ENCODE measurements at regions of chr11 and their contacts with region 1.

Region 1: GRCh38 chr11:16820324-16821092 is 82.1 kb downstream of the C11orf58 start:
- DNase-seq: peak; percentile 37
- ATAC-seq: peak; percentile 95
- H3K4me3 ChIP-seq: no peak overlapping the region
- H3K27ac ChIP-seq: no peak overlapping the region
- H3K4me1 ChIP-seq: peaks cover 4 to 9% of the 10 kb centered on the region in 2 experiments; a peak in 3 of 4 replicates
- H3K27me3 ChIP-seq: no peaks in the 10 kb centered on the region
- CTCF ChIP-seq: peak; percentile 80 to 95 (median 91)
- POLR2A ChIP-seq: no peak
- RAD21 ChIP-seq: peak; percentile 88

Region 2: GRCh38 chr11:16809886-16810668 is 10.4 kb before region 1 on chr11:
- CTCF ChIA-PET with region 1: interaction called, 15 read pairs
- POLR2A ChIA-PET with region 1: no interaction called
- RAD21 ChIA-PET with region 1: no interaction called
- intact Hi-C with region 1: no loop called
- DNase-seq: no peak
- ATAC-seq: no peak
- H3K4me3 ChIP-seq: no peak overlapping the region
- H3K27ac ChIP-seq: no peak overlapping the region
- H3K4me1 ChIP-seq: no peaks in the 10 kb centered on the region; a peak in 1 of 4 replicates
- H3K27me3 ChIP-seq: no peaks in the 10 kb centered on the region
- CTCF ChIP-seq: no peak
- POLR2A ChIP-seq: no peak
- RAD21 ChIP-seq: no peak

Region 3: DNA sequence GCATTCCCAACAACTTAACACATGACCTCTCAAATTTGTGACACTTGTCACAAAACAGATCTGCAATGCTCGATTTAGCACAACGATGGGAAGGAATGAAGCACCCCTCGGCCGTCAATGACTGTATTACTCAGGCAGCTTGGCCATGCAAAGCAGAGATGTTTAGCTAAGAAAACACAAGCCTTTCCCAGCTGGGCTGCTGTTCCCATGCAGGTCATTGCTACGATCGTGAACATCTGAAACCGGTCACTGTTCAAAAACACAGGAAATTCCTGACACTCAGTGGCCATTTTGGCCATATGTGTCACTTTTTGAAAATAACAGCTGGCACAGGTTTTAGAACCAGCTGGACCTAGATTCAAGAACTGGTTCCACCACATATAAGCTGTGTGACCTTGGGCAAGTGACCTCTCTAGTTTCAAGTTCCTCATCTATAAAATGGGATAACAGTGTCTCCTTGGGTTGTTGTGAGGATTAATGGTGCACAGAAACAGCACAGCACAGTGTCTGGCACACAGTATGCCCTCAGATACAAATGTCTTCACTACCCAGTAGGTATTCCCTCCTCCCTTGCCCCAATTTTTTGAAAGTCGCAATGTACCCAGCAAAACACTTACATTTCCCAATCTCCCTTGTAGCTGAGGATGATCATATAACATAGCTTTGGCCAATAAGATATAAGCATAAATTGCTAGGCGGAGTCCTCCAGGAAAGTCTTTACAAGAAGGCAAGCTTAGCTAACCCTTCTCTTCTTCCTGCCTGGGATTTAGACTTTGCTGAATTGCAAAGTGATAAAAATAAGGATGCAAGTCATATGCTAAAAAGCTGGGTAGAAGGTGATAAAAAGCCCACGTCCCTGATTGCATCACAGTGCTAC is 11.0 kb after region 1 on chr11:
- CTCF ChIA-PET with region 1: interaction called, 18 read pairs
- POLR2A ChIA-PET with region 1: no interaction called
- RAD21 ChIA-PET with region 1: no interaction called
- intact Hi-C with region 1: no loop called
- DNase-seq: no peak
- ATAC-seq: no peak
- H3K4me3 ChIP-seq: no peak overlapping the region
- H3K27ac ChIP-seq: no peak overlapping the region
- H3K4me1 ChIP-seq: no peaks in the 10 kb centered on the region
- H3K27me3 ChIP-seq: no peaks in the 10 kb centered on the region
- CTCF ChIP-seq: no peak
- POLR2A ChIP-seq: no peak
- RAD21 ChIP-seq: no peak

Region 4: GRCh38 chr11:16876053-16876752 is 55.7 kb after region 1 on chr11:
- CTCF ChIA-PET with region 1: interaction called, 12 read pairs
- POLR2A ChIA-PET with region 1: no interaction called
- RAD21 ChIA-PET with region 1: no interaction called
- intact Hi-C with region 1: no loop called
- DNase-seq: no peak
- ATAC-seq: no peak
- H3K4me3 ChIP-seq: no peak overlapping the region
- H3K27ac ChIP-seq: no peak overlapping the region
- H3K4me1 ChIP-seq: peaks cover 0 to 3% of the 10 kb centered on the region in 2 experiments; a peak in 2 of 4 replicates
- H3K27me3 ChIP-seq: no peaks in the 10 kb centered on the region
- CTCF ChIP-seq: no peak
- POLR2A ChIP-seq: no peak
- RAD21 ChIP-seq: no peak

Region 5: GRCh38 chr11:16883174-16883573 is 62.7 kb after region 1 on chr11:
- CTCF ChIA-PET with region 1: interaction called, 21 read pairs
- POLR2A ChIA-PET with region 1: no interaction called
- RAD21 ChIA-PET with region 1: no interaction called
- intact Hi-C with region 1: loop called (anchors 1 kb)
- DNase-seq: peak; percentile 39
- ATAC-seq: peak; percentile 82
- H3K4me3 ChIP-seq: no peak overlapping the region
- H3K27ac ChIP-seq: no peak overlapping the region
- H3K4me1 ChIP-seq: peaks cover 5 to 20% of the 10 kb centered on the region in 2 experiments; a peak in 3 of 4 replicates
- H3K27me3 ChIP-seq: no peaks in the 10 kb centered on the region
- CTCF ChIP-seq: peak; percentile 36 to 60 (median 45); a peak in 4 of 6 replicates
- POLR2A ChIP-seq: no peak
- RAD21 ChIP-seq: peak; percentile 62

Region 6: GRCh38 chr11:17046690-17047089 is 226.2 kb after region 1 on chr11:
- CTCF ChIA-PET with region 1: no interaction called
- POLR2A ChIA-PET with region 1: no interaction called
- RAD21 ChIA-PET with region 1: no interaction called
- intact Hi-C with region 1: no loop called
- DNase-seq: no peak
- ATAC-seq: no peak
- H3K4me3 ChIP-seq: no peak overlapping the region
- H3K27ac ChIP-seq: no peak overlapping the region
- H3K4me1 ChIP-seq: no peaks in the 10 kb centered on the region
- H3K27me3 ChIP-seq: no peaks in the 10 kb centered on the region
- CTCF ChIP-seq: no peak
- POLR2A ChIP-seq: no peak
- RAD21 ChIP-seq: no peak

Region 7: GRCh38 chr11:17063171-17064002 is 242.9 kb after region 1 on chr11:
- CTCF ChIA-PET with region 1: interaction called, 14 read pairs
- POLR2A ChIA-PET with region 1: no interaction called
- RAD21 ChIA-PET with region 1: no interaction called
- intact Hi-C with region 1: loop called (anchors 1 kb)
- DNase-seq: peak; percentile 42
- ATAC-seq: peak; percentile 99
- H3K4me3 ChIP-seq: no peak overlapping the region
- H3K27ac ChIP-seq: no peak overlapping the region
- H3K4me1 ChIP-seq: no peaks in the 10 kb centered on the region
- H3K27me3 ChIP-seq: no peaks in the 10 kb centered on the region
- CTCF ChIP-seq: peak; percentile 90 to 94 (median 90)
- POLR2A ChIP-seq: no peak
- RAD21 ChIP-seq: peak; percentile 97